ENCODE measurements at regions of chr4 and their contacts with region 1.

Region 1: GRCh38 chr4:2761035-2761923 is 5.1 kb upstream of the TNIP2 start:
- DNase-seq: no peak
- H3K4me3 ChIP-seq: no peak overlapping the region
- H3K27ac ChIP-seq: no peak overlapping the region
- H3K4me1 ChIP-seq: peaks cover 7 to 25% (median 20%) of the 10 kb centered on the region in 4 donors
- H3K27me3 ChIP-seq: no peaks in the 10 kb centered on the region
- CTCF ChIP-seq: peak in 1 of 3 experiments; percentile 4
- EP300 ChIP-seq: no peak
- POLR2A ChIP-seq: no peak

Region 2: DNA sequence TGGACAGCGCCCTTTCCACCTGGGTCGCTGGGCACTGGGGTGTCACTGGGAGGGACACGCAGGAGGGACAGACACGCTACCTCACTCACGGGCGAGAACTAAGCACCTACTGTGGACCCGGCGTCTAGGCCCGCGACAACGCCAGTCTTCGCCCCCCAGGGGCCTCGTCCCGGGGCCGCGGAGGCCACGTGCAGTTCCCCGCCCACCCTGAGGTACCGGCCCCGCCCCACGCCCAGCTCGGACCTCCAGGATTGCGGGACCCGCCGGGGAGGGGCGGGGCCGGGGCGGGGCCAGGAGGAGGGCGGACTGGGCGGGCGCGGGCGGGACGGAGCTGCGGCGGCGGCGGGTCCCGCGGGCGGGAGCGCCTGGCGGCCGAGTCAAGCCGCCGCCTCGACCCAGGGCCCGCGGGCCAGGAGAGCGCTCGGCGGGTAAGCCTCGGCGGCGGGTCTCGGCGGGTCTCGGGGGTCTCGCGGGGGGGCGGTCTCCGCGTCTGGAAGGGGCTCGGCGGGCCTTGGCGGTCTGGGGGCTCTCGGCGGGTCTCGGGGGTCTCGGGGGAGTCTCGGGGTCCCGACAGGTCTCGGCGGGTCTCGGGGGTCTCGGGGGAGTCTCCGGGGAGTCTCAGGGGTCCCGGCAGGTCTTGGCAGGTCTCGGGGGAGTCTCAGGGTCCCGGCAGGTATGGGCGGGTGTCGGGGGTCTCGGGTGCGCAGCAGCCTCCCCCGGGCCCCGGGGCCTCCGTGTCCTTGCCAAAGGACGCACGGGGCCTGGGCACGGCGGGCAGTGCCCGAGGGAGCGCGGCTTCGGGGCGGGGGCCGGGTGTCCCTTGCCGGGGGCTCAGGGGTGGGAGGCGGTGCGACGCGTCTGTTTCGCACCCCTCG is 31.7 kb after region 1 on chr4 and contains the start of gene SH3BP2:
- intact Hi-C with region 1: no loop called
- DNase-seq: no peak
- H3K4me3 ChIP-seq: peak within 1 kb of the TSS; percentile 64 to 84 (median 72)
- H3K27ac ChIP-seq: peak within 1 kb of the TSS; percentile 59 to 82 (median 76)
- H3K4me1 ChIP-seq: peaks cover 68 to 80% (median 76%) of the 10 kb centered on the region in 4 donors
- H3K27me3 ChIP-seq: no peaks in the 10 kb centered on the region
- CTCF ChIP-seq: peak in 1 of 3 experiments; percentile 13
- EP300 ChIP-seq: no peak
- POLR2A ChIP-seq: no peak
- total RNA-seq, gene SH3BP2: 25.2 to 34.5 (median 31.5) TPM

Region 3: GRCh38 chr4:2934813-2935761 is 173.8 kb after region 1 on chr4:
- intact Hi-C with region 1: loop called (anchors 10 kb)
- DNase-seq: peak; percentile 98
- H3K4me3 ChIP-seq: peak overlapping the region; percentile 82 to 97 (median 90)
- H3K27ac ChIP-seq: peak overlapping the region; percentile 80 to 96 (median 94)
- H3K4me1 ChIP-seq: peaks cover 55 to 64% (median 64%) of the 10 kb centered on the region in 4 donors
- H3K27me3 ChIP-seq: no peaks in the 10 kb centered on the region
- CTCF ChIP-seq: peak in 1 of 3 experiments; percentile 7
- EP300 ChIP-seq: no peak
- POLR2A ChIP-seq: peak; percentile 91

Region 4: DNA sequence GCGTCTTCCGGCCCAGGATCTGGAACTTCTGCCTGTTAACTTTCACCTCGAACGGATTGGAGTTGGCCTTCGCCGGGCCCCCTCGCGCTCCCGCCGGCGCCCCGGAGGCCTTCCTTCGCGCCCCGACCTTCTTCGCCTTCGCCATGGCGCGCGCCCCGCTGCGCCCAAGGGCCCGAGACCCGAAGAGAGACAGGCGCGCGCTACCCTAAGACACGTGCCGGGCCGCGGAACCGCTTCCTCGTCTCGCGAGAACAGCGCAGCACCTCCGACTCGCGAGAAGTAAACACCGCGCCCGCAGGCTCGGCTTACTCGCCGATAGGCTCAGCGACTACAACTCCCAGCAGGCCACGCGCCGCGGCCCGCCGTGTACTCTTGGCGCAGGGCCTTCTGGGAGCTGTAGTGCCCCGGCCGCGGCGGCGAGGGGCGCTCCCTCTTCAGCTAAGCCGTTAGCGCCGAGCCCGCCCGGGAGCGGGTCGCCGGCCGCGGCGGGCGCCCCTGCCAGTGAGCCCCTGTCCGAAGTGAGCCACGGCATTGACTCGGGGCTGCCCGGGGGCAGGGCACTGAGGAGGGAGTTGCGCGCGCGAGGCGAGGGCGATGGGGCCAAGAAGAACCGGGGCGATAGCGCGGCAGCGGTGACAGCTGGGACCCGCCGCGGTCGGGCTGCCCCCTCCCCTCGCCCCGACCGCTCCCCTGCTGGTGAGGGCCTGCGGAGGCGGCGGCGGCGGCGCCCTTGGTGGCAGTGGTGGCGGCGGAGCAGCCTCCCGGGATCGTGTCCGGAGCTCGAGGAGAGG is 202.1 kb after region 1 on chr4 and contains the starts of genes GRK4 and NOP14:
- intact Hi-C with region 1: loop called (anchors 10 kb)
- DNase-seq: peak; percentile 98
- H3K4me3 ChIP-seq: peak within 1 kb of the TSS; percentile 81 to 99 (median 98)
- H3K27ac ChIP-seq: peak within 1 kb of the TSS; percentile 84 to 90 (median 90)
- H3K4me1 ChIP-seq: peaks cover 25 to 49% (median 43%) of the 10 kb centered on the region in 4 donors
- H3K27me3 ChIP-seq: no peaks in the 10 kb centered on the region
- CTCF ChIP-seq: peak; percentile 39 to 57 (median 42)
- EP300 ChIP-seq: no peak
- POLR2A ChIP-seq: peak; percentile 18
- total RNA-seq, gene GRK4: 4.8 to 8.0 (median 6.4) TPM
- total RNA-seq, gene NOP14: 16.7 to 21.1 (median 18.8) TPM

Region 5: GRCh38 chr4:3037957-3038461 is 276.7 kb after region 1 on chr4:
- intact Hi-C with region 1: loop called (anchors 10 kb)
- DNase-seq: no peak
- H3K4me3 ChIP-seq: peak overlapping the region; percentile 34 to 46 (median 39)
- H3K27ac ChIP-seq: no peak overlapping the region
- H3K4me1 ChIP-seq: peaks cover 21 to 46% (median 38%) of the 10 kb centered on the region in 4 donors
- H3K27me3 ChIP-seq: peaks cover 0 to 17% (median 0%) of the 10 kb centered on the region in 4 donors
- CTCF ChIP-seq: no peak
- EP300 ChIP-seq: no peak
- POLR2A ChIP-seq: no peak

Measured in esophagus muscularis mucosa (tissue), 4 donors.